WTC11 (cell line): ENCODE measurements at regions of chr15 and their contacts with region 1.

Region 1: DNA sequence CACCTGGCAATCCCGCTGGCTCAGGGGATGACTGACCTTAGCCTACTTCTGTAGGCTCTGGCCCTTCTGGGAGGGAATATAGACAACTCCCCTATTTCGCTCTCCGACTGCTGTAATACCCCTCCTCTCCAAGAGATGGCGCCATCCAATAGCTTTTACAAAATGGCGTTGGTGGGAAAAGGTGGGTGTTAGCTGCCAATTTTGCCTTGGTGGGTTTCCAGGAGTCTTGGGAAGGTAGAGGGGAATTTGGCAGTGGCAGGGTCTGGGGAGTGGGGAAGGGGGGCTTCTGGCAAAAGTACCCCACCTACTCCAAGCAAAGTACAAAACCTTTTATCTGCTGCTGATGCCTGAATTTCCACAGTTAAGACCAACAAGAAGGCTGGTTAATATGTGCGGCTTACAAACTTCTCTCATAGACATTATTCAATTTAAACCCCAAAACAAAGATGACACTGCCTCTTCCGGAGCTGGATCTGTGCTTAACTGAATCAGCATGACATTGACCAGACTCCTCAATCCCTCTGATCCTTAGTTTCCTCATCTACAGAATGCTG is 62.1 kb downstream of the RASGRF1 start:
- DNase-seq: peak; percentile 75
- ATAC-seq: peak; percentile 65
- H3K4me3 Mint-ChIP-seq: no peak overlapping the region
- H3K27ac Mint-ChIP-seq: no peak overlapping the region
- H3K4me1 Mint-ChIP-seq: peaks cover 11% of the 10 kb centered on the region
- H3K27me3 Mint-ChIP-seq: no peaks in the 10 kb centered on the region; the same call in 1 of the 2 replicates
- CTCF ChIP-seq: peak; percentile 95

Region 2: DNA sequence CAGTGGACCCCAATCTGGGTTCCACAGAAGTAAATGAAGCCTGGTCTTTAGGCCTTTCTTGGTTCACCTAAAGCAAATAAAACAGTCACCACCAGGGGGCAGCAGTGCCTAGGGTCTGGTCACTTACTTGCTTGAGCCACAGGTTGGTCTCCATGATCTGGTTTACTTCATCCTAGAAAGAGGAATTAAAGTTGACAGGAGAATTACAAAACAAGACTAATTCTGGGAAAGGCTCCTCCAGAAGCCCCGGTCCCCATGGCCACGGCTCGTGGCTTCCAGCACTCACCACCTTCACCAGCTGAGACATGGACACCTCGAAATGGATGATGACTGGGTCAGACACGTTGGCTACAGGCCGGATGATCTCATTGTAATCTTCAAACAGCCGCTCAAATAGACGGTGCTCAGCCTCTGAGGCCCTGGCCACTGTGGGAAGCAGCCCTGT is 410.0 kb before region 1 on chr15:
- CTCF ChIA-PET with region 1: no interaction called
- POLR2A ChIA-PET with region 1: no interaction called
- DNase-seq: peak; percentile 94
- ATAC-seq: peak; percentile 24
- H3K4me3 Mint-ChIP-seq: peak overlapping the region; percentile 33
- H3K27ac Mint-ChIP-seq: no peak overlapping the region
- H3K4me1 Mint-ChIP-seq: peaks cover 23% of the 10 kb centered on the region
- H3K27me3 Mint-ChIP-seq: peaks cover 48% of the 10 kb centered on the region
- CTCF ChIP-seq: peak; percentile 66

Region 3: GRCh38 chr15:78767331-78767951 is 261.0 kb before region 1 on chr15:
- CTCF ChIA-PET with region 1: no interaction called
- POLR2A ChIA-PET with region 1: no interaction called
- DNase-seq: peak; percentile 28
- ATAC-seq: peak; percentile 14
- H3K4me3 Mint-ChIP-seq: no peak overlapping the region
- H3K27ac Mint-ChIP-seq: no peak overlapping the region
- H3K4me1 Mint-ChIP-seq: peaks cover 18% of the 10 kb centered on the region
- H3K27me3 Mint-ChIP-seq: no peaks in the 10 kb centered on the region
- CTCF ChIP-seq: no peak

Region 4: GRCh38 chr15:78909791-78910228 is 118.7 kb before region 1 on chr15:
- CTCF ChIA-PET with region 1: interaction called, 42 read pairs
- POLR2A ChIA-PET with region 1: no interaction called
- DNase-seq: peak; percentile 65
- ATAC-seq: peak; percentile 79
- H3K4me3 Mint-ChIP-seq: no peak overlapping the region
- H3K27ac Mint-ChIP-seq: peak overlapping the region; percentile 89
- H3K4me1 Mint-ChIP-seq: peaks cover 26% of the 10 kb centered on the region
- H3K27me3 Mint-ChIP-seq: no peaks in the 10 kb centered on the region
- CTCF ChIP-seq: peak; percentile 70

Region 5: DNA sequence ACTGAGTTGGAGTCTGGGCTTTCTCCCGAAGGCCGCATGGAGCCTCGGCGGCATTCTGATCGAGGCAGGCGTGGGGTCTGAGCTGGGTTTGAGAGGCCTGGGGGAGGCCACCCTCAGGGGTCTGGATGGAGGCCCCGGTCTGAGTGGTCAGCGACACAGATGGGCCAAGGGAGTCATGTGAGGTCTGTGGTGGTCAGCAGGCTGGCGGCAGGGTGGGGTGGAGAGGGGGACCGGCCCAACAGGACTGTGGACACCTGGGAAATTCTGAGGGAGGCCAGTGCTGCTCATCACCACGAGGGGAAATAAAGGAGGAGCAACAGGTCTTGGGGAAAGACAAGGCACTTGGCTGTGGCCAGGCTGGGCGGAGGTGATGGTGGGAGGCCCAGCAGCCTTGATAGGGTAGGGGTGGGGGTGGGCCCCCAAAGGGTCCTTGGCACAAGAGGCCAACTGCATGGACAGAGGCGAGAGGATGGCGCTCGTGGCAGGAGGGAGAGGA is 99.8 kb before region 1 on chr15:
- CTCF ChIA-PET with region 1: no interaction called
- POLR2A ChIA-PET with region 1: no interaction called
- DNase-seq: no peak
- ATAC-seq: no peak
- H3K4me3 Mint-ChIP-seq: no peak overlapping the region
- H3K27ac Mint-ChIP-seq: no peak overlapping the region
- H3K4me1 Mint-ChIP-seq: peaks cover 2% of the 10 kb centered on the region; the same call in 1 of the 2 replicates
- H3K27me3 Mint-ChIP-seq: no peaks in the 10 kb centered on the region
- CTCF ChIP-seq: no peak

Region 6: GRCh38 chr15:79009379-79009778 is 19.1 kb before region 1 on chr15:
- CTCF ChIA-PET with region 1: interaction called, 67 read pairs
- POLR2A ChIA-PET with region 1: no interaction called
- DNase-seq: no peak
- ATAC-seq: no peak
- H3K4me3 Mint-ChIP-seq: no peak overlapping the region
- H3K27ac Mint-ChIP-seq: no peak overlapping the region
- H3K4me1 Mint-ChIP-seq: peaks cover 9% of the 10 kb centered on the region
- H3K27me3 Mint-ChIP-seq: no peaks in the 10 kb centered on the region
- CTCF ChIP-seq: no peak

Region 7: DNA sequence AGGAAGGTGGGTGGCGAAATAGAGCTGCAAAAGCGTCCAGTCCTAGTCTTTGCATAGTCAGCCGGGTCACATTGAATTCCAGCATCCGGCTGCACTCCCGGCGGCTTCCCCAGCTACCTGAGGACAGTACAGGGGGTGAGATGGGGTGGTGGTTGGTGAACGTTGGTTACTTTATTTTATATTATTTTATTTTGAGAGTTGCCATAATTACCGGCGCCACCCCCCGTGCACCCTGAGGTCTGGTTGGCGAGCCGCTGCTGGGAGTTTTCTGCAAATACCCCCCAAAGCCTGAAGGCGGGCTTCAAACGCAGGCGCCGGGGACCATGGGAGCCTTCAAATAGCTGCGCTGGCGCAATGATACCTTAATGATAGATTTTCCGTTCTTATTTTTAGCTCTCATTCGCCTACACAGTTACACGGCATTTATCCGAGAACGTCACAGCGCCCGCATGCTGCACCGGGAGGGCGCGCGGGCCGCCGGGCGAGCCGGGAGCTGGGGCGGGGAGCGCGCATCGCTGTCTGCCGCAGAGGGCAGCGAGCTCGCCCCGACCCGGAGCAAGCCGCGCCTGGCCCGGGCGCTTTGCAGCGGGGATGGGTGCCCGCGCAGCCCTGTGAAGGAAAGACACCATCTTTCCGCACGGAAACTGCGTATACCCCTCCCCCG is 62.8 kb after region 1 on chr15:
- CTCF ChIA-PET with region 1: interaction called, 42 read pairs
- POLR2A ChIA-PET with region 1: no interaction called
- DNase-seq: peak; percentile 51
- ATAC-seq: peak; percentile 31
- H3K4me3 Mint-ChIP-seq: peak overlapping the region; percentile 89
- H3K27ac Mint-ChIP-seq: no peak overlapping the region
- H3K4me1 Mint-ChIP-seq: peaks cover 11% of the 10 kb centered on the region
- H3K27me3 Mint-ChIP-seq: peaks cover 99% of the 10 kb centered on the region
- CTCF ChIP-seq: no peak

Region 8: DNA sequence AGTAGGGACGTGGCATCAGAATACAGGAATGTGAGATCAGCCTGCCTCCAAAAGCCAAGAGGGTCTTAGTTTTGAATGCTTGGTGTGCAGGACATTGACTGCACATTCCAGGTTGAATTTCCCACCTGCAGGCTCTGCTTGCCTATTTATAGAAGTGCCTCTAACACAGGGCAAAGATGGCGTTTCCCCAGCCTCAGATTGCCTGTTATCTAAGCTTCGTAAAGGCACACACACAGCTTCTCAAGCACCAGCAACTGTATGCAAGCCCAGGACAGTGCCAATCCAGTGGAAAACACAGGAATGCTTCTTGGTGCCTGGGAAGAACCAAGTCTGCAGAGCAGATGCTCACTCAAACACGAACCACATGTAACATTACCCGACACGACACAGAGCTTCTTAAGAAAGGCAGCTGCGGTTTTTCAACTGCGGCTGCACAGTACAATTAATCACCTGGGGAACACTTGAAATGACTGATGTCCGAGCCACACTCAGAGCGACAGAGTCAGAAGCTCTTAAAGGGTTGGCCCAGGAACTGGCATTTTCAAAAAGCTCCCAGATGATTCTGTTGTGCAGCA is 164.1 kb after region 1 on chr15:
- CTCF ChIA-PET with region 1: interaction called, 10 read pairs
- POLR2A ChIA-PET with region 1: no interaction called
- DNase-seq: no peak
- ATAC-seq: no peak
- H3K4me3 Mint-ChIP-seq: no peak overlapping the region
- H3K27ac Mint-ChIP-seq: no peak overlapping the region
- H3K4me1 Mint-ChIP-seq: peaks cover 27% of the 10 kb centered on the region
- H3K27me3 Mint-ChIP-seq: peaks cover 7% of the 10 kb centered on the region
- CTCF ChIP-seq: no peak